Panc1 (cell line): ENCODE measurements at regions of chr5 and their contacts with region 1.

Region 1: DNA sequence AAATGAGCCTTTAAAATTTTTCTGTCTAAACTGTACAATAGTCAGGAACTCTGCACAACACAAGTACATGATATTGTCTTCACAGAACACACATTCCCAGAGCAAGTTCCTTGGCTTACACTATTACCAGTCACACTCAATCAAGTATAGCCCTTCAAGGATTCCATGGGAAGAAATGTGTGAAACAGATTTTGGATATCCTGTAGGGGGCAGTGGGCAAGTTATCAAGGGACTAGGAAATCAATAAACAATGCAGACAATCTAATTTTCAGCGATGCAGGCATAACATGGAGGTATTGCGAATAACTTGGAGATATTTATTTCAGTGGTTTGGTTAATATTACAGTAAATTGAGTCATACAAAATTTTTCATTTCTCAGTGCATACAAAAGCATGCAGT is 1171.5 kb upstream of the NUDT12 start:
- DNase-seq: no peak
- ATAC-seq: no peak
- H3K4me3 ChIP-seq: no peak overlapping the region
- H3K27ac ChIP-seq: no peak overlapping the region; the same call in 1 of the 2 replicates
- H3K4me1 ChIP-seq: peaks cover 3% of the 10 kb centered on the region; the same call in 1 of the 2 replicates
- H3K27me3 ChIP-seq: no peaks in the 10 kb centered on the region
- CTCF ChIP-seq: no peak

Region 2: DNA sequence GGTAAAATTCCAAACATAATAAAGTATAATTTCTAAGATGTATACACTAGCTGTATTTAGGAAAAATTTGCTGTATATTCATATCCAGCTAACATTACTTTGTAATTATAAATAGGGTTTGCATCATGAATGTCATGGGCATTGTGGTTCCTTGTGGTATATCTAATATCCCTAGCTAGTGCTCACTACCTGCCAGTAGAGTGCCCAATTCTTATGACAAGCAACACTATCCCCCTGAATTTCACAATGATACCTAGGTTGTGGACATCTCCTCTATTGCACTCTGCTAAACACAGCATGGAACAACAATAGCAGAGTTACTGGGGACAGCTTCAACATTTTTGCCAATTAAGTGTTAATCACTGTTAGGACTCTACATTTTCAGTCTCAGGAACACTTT is 1280.2 kb after region 1 on chr5:
- CTCF ChIA-PET with region 1: interaction called, 12 read pairs
- POLR2A ChIA-PET with region 1: no interaction called
- in situ Hi-C with region 1: no loop called
- intact Hi-C with region 1: no loop called
- DNase-seq: no peak
- ATAC-seq: no peak
- H3K4me3 ChIP-seq: no peak overlapping the region
- H3K27ac ChIP-seq: no peak overlapping the region
- H3K4me1 ChIP-seq: no peaks in the 10 kb centered on the region
- H3K27me3 ChIP-seq: no peaks in the 10 kb centered on the region
- CTCF ChIP-seq: no peak